Tibial artery (tissue), 4 donors: ENCODE measurements at regions of chr16 and their contacts with region 1.

Region 1: GRCh38 chr16:3234543-3235541 is at the start of gene ZNF200:
- DNase-seq: peak; percentile 95 to 97
- H3K4me3 ChIP-seq: peak within 1 kb of the TSS; percentile 71 to 94
- H3K27ac ChIP-seq: peak within 1 kb of the TSS; percentile 85 to 94
- H3K4me1 ChIP-seq: peaks cover 0 to 17% (median 13%) of the 10 kb centered on the region in 4 donors
- H3K27me3 ChIP-seq: no peaks in the 10 kb centered on the region
- CTCF ChIP-seq: no peak

Region 2: GRCh38 chr16:3282730-3283524 is 48.1 kb after region 1 on chr16 and contains the start of gene ZNF263:
- intact Hi-C with region 1: loop called (anchors 10 kb)
- DNase-seq: peak; percentile 95 to 98
- H3K4me3 ChIP-seq: peak within 1 kb of the TSS; percentile 87 to 98
- H3K27ac ChIP-seq: peak within 1 kb of the TSS; percentile 97 to 98
- H3K4me1 ChIP-seq: peaks cover 0 to 34% (median 27%) of the 10 kb centered on the region in 4 donors
- H3K27me3 ChIP-seq: no peaks in the 10 kb centered on the region
- CTCF ChIP-seq: peak in 1 of 2 experiments; percentile 7

Region 3: DNA sequence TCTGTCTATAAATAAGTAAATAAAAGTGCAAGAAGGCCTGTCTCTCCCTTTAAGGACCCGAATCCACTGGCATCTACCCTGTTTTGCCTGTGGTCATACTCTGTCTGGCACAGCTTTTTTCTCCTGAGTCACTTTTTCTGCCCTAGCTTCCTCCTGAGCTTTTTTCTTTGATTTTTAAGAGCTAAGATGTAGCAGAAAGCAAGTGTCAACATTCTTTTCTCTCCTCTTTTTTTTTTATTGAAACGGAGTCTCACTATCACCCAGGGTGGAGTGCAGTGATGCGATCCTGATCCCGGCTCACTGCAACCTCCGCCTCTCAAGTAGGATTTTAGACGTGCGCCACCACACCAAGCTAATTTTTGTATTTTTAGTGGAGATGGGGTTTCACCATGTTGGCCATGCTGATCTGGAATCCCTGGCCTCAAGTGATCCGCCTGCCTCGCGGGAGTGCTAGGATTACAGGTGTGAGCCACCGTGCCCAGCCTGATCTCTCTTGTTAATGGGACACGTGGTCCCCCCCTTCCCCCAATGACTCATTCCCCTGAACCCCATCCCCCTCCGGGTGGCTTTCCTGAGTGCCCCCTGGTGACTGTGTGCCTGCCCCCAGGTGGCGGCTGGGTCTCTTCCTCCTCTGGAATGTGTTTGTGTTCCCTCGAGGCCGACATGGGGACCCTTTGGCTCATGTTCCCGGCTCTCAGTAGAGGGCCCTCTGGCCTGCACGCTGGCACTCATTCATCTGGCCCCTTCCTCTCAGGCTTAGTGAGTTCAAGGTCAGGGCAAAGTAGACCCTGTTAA is 246.3 kb after region 1 on chr16:
- intact Hi-C with region 1: no loop called
- DNase-seq: no peak
- H3K4me3 ChIP-seq: no peak overlapping the region
- H3K27ac ChIP-seq: no peak overlapping the region
- H3K4me1 ChIP-seq: no peaks in the 10 kb centered on the region
- H3K27me3 ChIP-seq: no peaks in the 10 kb centered on the region
- CTCF ChIP-seq: no peak